ENCODE measurements at regions of chr20 and their contacts with region 1.

Region 1: GRCh38 chr20:59120491-59120890 is 43.1 kb upstream of the ZNF831 start:
- DNase-seq: no peak
- ATAC-seq: no peak
- H3K4me3 Mint-ChIP-seq: peak overlapping the region; percentile 54
- H3K27ac Mint-ChIP-seq: peak overlapping the region; percentile 99
- H3K4me1 Mint-ChIP-seq: peaks cover 68% of the 10 kb centered on the region
- H3K27me3 Mint-ChIP-seq: no peaks in the 10 kb centered on the region
- CTCF ChIP-seq: no peak

Region 2: GRCh38 chr20:58660855-58661596 is 459.5 kb before region 1 on chr20:
- CTCF ChIA-PET with region 1: no interaction called
- POLR2A ChIA-PET with region 1: interaction called, 14 read pairs
- intact Hi-C with region 1: no loop called
- DNase-seq: no peak
- ATAC-seq: no peak
- H3K4me3 Mint-ChIP-seq: no peak overlapping the region
- H3K27ac Mint-ChIP-seq: no peak overlapping the region
- H3K4me1 Mint-ChIP-seq: peaks cover 23% of the 10 kb centered on the region
- H3K27me3 Mint-ChIP-seq: no peaks in the 10 kb centered on the region
- CTCF ChIP-seq: no peak

Region 3: DNA sequence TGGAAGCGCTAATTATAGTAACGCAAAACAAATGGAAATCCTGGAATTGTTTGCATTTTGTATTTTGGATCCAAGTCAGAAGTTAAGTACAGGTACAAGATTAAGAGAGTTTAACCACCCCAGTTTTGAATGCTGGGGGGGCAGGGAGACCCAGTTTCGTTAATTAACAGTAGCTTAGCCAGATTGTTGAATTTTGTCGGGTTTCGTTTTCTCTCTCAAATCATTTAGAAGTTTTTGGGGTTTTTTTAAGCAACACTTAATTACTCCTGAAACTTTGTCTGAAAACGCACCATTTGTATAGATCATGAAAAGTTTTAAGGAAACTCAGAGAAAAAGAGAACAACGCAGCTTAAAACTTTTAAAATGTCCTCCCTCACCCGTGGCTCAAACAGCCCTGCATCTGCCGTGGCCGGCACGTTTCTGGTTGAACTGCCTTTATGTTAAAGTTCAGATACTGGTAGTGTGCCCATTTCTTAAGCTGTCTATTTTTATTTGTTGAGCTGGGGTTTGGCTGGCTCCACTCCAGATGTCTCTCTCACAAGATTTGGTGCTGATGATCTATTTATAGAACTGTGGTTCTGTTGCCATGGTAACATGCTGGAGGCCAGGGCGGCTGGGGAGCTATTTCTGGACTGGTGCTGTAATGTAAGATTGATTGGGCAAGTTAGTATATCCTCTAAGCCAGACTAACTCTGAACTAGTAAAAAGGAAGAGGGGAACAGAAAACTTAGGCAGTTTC is 212.9 kb before region 1 on chr20:
- CTCF ChIA-PET with region 1: no interaction called
- POLR2A ChIA-PET with region 1: interaction called, 10 read pairs
- intact Hi-C with region 1: no loop called
- DNase-seq: peak; percentile 50
- ATAC-seq: peak; percentile 83
- H3K4me3 Mint-ChIP-seq: peak overlapping the region; percentile 82
- H3K27ac Mint-ChIP-seq: peak overlapping the region; percentile 97
- H3K4me1 Mint-ChIP-seq: peaks cover 61% of the 10 kb centered on the region
- H3K27me3 Mint-ChIP-seq: no peaks in the 10 kb centered on the region
- CTCF ChIP-seq: no peak

Region 4: GRCh38 chr20:59020938-59021551 is 99.4 kb before region 1 on chr20:
- CTCF ChIA-PET with region 1: no interaction called
- POLR2A ChIA-PET with region 1: no interaction called
- intact Hi-C with region 1: no loop called
- DNase-seq: no peak
- ATAC-seq: no peak
- H3K4me3 Mint-ChIP-seq: no peak overlapping the region
- H3K27ac Mint-ChIP-seq: peak overlapping the region; percentile 46
- H3K4me1 Mint-ChIP-seq: peaks cover 23% of the 10 kb centered on the region
- H3K27me3 Mint-ChIP-seq: no peaks in the 10 kb centered on the region
- CTCF ChIP-seq: no peak

Region 5: GRCh38 chr20:59149651-59150504 is 29.4 kb after region 1 on chr20:
- CTCF ChIA-PET with region 1: no interaction called
- POLR2A ChIA-PET with region 1: interaction called, 5 read pairs
- intact Hi-C with region 1: loop called (anchors 1 kb)
- DNase-seq: peak; percentile 40
- ATAC-seq: peak; percentile 73
- H3K4me3 Mint-ChIP-seq: peak overlapping the region; percentile 33
- H3K27ac Mint-ChIP-seq: peak overlapping the region; percentile 90
- H3K4me1 Mint-ChIP-seq: peaks cover 65% of the 10 kb centered on the region
- H3K27me3 Mint-ChIP-seq: no peaks in the 10 kb centered on the region
- CTCF ChIP-seq: no peak

Region 6: GRCh38 chr20:59182401-59183044 is 62.0 kb after region 1 on chr20:
- CTCF ChIA-PET with region 1: no interaction called
- POLR2A ChIA-PET with region 1: interaction called, 6 read pairs
- intact Hi-C with region 1: loop called (anchors 1 kb)
- DNase-seq: no peak
- ATAC-seq: peak; percentile 76
- H3K4me3 Mint-ChIP-seq: peak overlapping the region; percentile 38
- H3K27ac Mint-ChIP-seq: no peak overlapping the region
- H3K4me1 Mint-ChIP-seq: peaks cover 48% of the 10 kb centered on the region
- H3K27me3 Mint-ChIP-seq: no peaks in the 10 kb centered on the region
- CTCF ChIP-seq: no peak

Region 7: GRCh38 chr20:59222253-59223181 is 102.0 kb after region 1 on chr20:
- CTCF ChIA-PET with region 1: no interaction called
- POLR2A ChIA-PET with region 1: interaction called, 5 read pairs
- intact Hi-C with region 1: loop called (anchors 1 kb)
- DNase-seq: peak; percentile 84
- ATAC-seq: peak; percentile 97
- H3K4me3 Mint-ChIP-seq: peak overlapping the region; percentile 84
- H3K27ac Mint-ChIP-seq: no peak overlapping the region
- H3K4me1 Mint-ChIP-seq: peaks cover 11% of the 10 kb centered on the region
- H3K27me3 Mint-ChIP-seq: peaks cover 9% of the 10 kb centered on the region
- CTCF ChIP-seq: peak; percentile 83